ENCODE measurements at regions of chr19 and their contacts with region 1.

Region 1: DNA sequence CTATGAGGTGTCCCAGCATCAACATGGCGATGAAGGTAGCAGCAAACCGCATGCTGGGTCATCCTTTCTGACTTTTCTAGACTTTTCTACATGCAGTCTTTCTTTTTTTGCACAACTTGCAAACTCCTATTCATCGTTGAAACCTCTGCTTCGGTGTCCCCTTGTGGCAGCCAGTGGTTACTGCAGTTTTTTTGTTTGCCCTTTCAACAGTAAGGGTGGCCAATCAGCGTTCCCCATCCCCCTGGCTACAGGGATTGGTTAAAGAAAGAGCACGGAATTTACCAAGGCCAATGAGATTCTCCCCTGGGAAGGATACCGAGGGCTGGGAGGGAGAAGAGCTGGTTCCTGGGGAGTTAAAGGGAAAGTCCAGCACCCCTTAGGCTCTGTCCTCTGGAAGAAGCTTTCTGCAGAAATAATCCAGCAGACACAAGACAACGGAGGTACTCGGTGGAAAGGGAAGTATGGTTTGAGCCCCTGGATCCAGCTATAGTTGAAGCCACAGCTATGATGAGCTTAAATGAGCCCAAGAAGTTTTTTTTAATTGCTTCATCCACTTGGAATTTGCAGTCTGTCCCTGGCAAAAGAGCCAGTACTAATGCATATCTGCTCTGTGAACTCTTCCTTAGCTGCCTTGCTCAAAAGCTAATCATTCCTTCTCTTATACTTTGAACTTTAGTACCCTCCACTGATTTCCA is 5.6 kb upstream of the LSM4 start:
- DNase-seq: peak; percentile 91
- ATAC-seq: peak; percentile 100
- H3K4me3 ChIP-seq: peak overlapping the region; percentile 64
- H3K27ac ChIP-seq: peak overlapping the region; percentile 27
- H3K4me1 ChIP-seq: peaks cover 4% of the 10 kb centered on the region
- H3K27me3 ChIP-seq: no peaks in the 10 kb centered on the region
- CTCF ChIP-seq: peak; percentile 89 to 98 (median 95)
- EP300 ChIP-seq: no peak
- POLR2A ChIP-seq: no peak
- RAD21 ChIP-seq: peak; percentile 91

Region 2: DNA sequence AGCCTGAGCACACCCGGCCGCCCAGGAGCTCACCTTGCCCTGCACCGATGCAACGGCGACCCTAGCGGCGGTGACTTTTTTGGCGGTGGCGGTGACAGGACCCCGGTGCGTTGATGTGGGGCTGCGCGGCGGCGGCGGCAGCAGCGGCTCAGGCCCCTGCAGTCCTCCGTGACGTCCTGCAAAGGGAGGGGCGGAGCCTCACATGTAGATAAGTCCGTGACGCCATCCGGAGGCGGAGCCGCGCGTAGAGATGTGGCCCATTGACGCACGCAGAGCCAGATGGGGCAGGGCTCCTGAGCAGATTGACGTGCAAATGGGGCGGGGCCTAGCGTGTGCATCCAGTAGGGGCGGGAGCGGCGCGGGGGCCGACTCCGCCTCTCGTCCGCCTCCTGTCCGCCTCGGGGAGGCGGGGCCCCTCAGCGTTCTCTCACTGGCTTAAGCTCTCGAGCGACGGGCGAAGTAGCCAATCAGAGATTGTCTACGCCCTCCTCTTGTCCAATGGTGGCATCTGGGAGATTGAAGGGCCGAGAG is 124.6 kb before region 1 on chr19 and contains the start of gene RAB3A:
- CTCF ChIA-PET with region 1: interaction called, 14 read pairs
- POLR2A ChIA-PET with region 1: interaction called, 4 read pairs
- RAD21 ChIA-PET with region 1: interaction called, 14 read pairs
- SMC1A ChIA-PET with region 1: interaction called, 11 read pairs
- in situ Hi-C with region 1: no loop called
- intact Hi-C with region 1: loop called (anchors 5 kb)
- DNase-seq: peak; percentile 99
- ATAC-seq: peak; percentile 97
- H3K4me3 ChIP-seq: peak within 1 kb of the TSS; percentile 86
- H3K27ac ChIP-seq: peak within 1 kb of the TSS; percentile 68
- H3K4me1 ChIP-seq: peaks cover 6% of the 10 kb centered on the region
- H3K27me3 ChIP-seq: no peaks in the 10 kb centered on the region
- CTCF ChIP-seq: no peak
- EP300 ChIP-seq: no peak
- POLR2A ChIP-seq: peak; percentile 47; the same call in 1 of the 2 replicates
- RAD21 ChIP-seq: no peak
- polyA plus RNA-seq, gene RAB3A: 0.07 TPM in 1 of 2 experiments, not detected in the other

Region 3: DNA sequence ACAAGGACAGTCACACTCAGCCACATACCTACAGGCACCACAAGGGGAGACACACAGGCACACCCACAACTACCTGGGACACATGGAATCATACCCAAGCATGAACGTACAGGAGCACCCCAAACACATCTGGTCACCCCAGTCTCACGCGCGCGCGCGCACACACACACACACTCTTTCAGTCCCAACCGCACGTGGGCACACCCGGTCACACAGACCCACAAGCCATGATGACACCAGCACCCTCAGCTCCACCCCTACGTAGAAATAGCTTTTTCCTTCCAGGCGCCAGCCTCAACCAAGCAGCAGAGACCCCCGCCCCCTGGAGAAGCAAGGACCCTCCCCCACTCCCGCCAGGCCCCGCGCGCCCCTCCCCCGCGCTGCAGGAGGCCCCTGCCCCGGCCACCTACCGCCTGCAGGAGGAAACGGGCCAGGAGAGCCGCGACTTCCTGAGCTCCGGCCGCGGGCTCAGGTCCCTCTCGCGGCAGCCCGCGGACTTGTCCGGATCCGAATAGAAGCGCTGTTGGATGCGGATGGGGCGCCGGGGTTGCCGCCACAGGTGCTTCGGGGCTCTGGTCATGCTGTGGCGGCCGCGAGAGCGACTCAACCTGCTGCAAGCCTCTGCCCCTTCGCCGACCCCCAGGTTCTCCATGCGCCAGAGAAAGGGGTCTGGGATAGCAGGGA is 95.8 kb before region 1 on chr19:
- CTCF ChIA-PET with region 1: interaction called, 20 read pairs
- POLR2A ChIA-PET with region 1: interaction called, 3 read pairs
- RAD21 ChIA-PET with region 1: interaction called, 11 read pairs
- SMC1A ChIA-PET with region 1: interaction called, 6 read pairs
- in situ Hi-C with region 1: no loop called
- intact Hi-C with region 1: no loop called
- DNase-seq: no peak
- ATAC-seq: no peak
- H3K4me3 ChIP-seq: no peak overlapping the region
- H3K27ac ChIP-seq: no peak overlapping the region
- H3K4me1 ChIP-seq: 0 out of 2 replicates have a peak, but pooled peaks cover 4% of the 10 kb centered on the region
- H3K27me3 ChIP-seq: no peaks in the 10 kb centered on the region; a peak in 2 of 4 replicates
- CTCF ChIP-seq: no peak
- EP300 ChIP-seq: no peak
- POLR2A ChIP-seq: no peak
- RAD21 ChIP-seq: no peak

Region 4: DNA sequence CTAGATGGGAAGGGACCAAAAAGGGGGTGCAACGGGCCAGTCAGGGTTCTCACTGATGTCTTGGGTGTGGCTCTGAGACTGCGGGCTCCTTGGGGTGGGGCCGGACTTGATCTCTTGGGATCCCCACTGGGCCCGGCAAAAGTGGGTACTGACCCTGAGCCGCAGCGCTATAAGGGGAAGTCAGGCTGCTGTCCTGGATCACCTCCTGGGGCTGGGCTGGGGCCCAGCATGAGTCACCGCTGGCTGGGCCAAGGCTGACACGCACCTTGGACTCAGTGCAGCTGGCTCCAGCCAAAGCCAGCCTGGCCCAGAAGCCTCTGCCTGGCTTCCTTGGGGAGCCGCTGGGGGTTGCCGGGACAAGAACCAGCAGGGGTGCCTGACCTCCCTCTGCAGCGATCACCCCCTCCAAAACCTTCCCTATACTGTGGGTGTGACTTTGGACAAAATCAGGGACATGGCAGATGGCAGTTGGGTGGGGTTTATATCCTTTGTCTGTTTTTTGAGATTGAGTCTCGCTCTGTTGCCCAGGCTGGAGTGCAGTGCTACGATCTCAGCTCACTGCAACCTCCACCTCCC is 53.6 kb before region 1 on chr19:
- CTCF ChIA-PET with region 1: interaction called, 516 read pairs
- POLR2A ChIA-PET with region 1: interaction called, 206 read pairs
- RAD21 ChIA-PET with region 1: interaction called, 259 read pairs
- SMC1A ChIA-PET with region 1: interaction called, 176 read pairs
- in situ Hi-C with region 1: loop called (anchors 5 kb)
- intact Hi-C with region 1: loop called (anchors 1 kb)
- DNase-seq: no peak
- ATAC-seq: peak; percentile 4; the same call in 1 of the 3 replicates
- H3K4me3 ChIP-seq: no peak overlapping the region
- H3K27ac ChIP-seq: no peak overlapping the region
- H3K4me1 ChIP-seq: peaks cover 13% of the 10 kb centered on the region
- H3K27me3 ChIP-seq: no peaks in the 10 kb centered on the region
- CTCF ChIP-seq: no peak
- EP300 ChIP-seq: no peak
- POLR2A ChIP-seq: peak; percentile 47; the same call in 1 of the 2 replicates
- RAD21 ChIP-seq: no peak

Region 5: GRCh38 chr19:18304458-18305310 is 23.8 kb before region 1 on chr19:
- CTCF ChIA-PET with region 1: interaction called, 9 read pairs
- POLR2A ChIA-PET with region 1: interaction called, 13 read pairs
- RAD21 ChIA-PET with region 1: interaction called, 17 read pairs
- SMC1A ChIA-PET with region 1: interaction called, 8 read pairs
- in situ Hi-C with region 1: no loop called
- intact Hi-C with region 1: no loop called
- DNase-seq: no peak
- ATAC-seq: peak; percentile 79
- H3K4me3 ChIP-seq: peak overlapping the region; percentile 89
- H3K27ac ChIP-seq: peak overlapping the region; percentile 97
- H3K4me1 ChIP-seq: peaks cover 22% of the 10 kb centered on the region
- H3K27me3 ChIP-seq: no peaks in the 10 kb centered on the region
- CTCF ChIP-seq: no peak
- EP300 ChIP-seq: no peak; a peak in 2 of 4 replicates
- POLR2A ChIP-seq: peak; percentile 82
- RAD21 ChIP-seq: no peak

Region 6: DNA sequence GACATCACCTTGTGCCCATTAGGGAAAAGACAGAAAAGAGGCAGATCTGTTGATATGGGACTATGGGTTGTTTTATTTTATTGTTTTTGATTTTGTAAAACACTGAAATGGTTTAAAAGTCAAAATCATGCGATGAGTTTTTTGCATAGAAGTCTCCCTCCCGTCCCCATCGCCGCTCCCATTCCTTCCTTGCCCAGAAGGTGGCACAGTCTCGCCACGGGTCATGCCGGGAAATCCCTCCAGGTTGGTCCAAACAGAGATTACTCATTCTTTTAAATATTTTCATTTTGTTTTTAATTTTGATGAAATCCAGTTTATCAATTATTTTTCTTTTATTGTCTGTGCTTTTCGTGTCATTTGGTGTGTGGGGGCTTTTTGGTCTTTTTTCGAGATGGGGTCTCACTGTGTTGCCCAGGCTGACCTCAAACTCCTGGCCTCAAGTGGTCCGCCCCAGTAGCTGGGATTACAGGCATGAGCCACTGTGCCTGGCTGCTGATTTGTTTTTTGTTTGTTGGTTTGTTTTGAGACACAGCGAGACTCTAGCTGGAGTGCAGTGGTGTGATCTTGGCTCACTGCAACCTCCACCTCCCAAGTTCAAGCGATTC is 21.1 kb after region 1 on chr19:
- CTCF ChIA-PET with region 1: interaction called, 5 read pairs
- POLR2A ChIA-PET with region 1: interaction called, 11 read pairs
- RAD21 ChIA-PET with region 1: interaction called, 3 read pairs
- SMC1A ChIA-PET with region 1: interaction called, 5 read pairs
- in situ Hi-C with region 1: no loop called
- intact Hi-C with region 1: no loop called
- DNase-seq: no peak
- ATAC-seq: peak; percentile 80
- H3K4me3 ChIP-seq: no peak overlapping the region
- H3K27ac ChIP-seq: no peak overlapping the region
- H3K4me1 ChIP-seq: no peaks in the 10 kb centered on the region
- H3K27me3 ChIP-seq: no peaks in the 10 kb centered on the region
- CTCF ChIP-seq: peak; percentile 74 to 93 (median 80)
- EP300 ChIP-seq: no peak
- POLR2A ChIP-seq: no peak
- RAD21 ChIP-seq: peak; percentile 88

Measured in GM12878 (cell line).